OCI-LY7 (cell line): ENCODE measurements at regions of chr5 and their contacts with region 1.

Region 1: GRCh38 chr5:88819301-88819999 is 63.5 kb downstream of the MEF2C start:
- DNase-seq: no peak
- H3K4me3 ChIP-seq: no peak overlapping the region
- H3K27ac ChIP-seq: no peak overlapping the region
- H3K4me1 ChIP-seq: peaks cover 50% of the 10 kb centered on the region
- CTCF ChIP-seq: no peak

Region 2: GRCh38 chr5:88583471-88583870 is 236.0 kb before region 1 on chr5:
- CTCF ChIA-PET with region 1: no interaction called
- POLR2A ChIA-PET with region 1: no interaction called
- intact Hi-C with region 1: no loop called
- DNase-seq: no peak
- H3K4me3 ChIP-seq: no peak overlapping the region
- H3K27ac ChIP-seq: no peak overlapping the region
- H3K4me1 ChIP-seq: no peaks in the 10 kb centered on the region
- CTCF ChIP-seq: no peak

Region 3: DNA sequence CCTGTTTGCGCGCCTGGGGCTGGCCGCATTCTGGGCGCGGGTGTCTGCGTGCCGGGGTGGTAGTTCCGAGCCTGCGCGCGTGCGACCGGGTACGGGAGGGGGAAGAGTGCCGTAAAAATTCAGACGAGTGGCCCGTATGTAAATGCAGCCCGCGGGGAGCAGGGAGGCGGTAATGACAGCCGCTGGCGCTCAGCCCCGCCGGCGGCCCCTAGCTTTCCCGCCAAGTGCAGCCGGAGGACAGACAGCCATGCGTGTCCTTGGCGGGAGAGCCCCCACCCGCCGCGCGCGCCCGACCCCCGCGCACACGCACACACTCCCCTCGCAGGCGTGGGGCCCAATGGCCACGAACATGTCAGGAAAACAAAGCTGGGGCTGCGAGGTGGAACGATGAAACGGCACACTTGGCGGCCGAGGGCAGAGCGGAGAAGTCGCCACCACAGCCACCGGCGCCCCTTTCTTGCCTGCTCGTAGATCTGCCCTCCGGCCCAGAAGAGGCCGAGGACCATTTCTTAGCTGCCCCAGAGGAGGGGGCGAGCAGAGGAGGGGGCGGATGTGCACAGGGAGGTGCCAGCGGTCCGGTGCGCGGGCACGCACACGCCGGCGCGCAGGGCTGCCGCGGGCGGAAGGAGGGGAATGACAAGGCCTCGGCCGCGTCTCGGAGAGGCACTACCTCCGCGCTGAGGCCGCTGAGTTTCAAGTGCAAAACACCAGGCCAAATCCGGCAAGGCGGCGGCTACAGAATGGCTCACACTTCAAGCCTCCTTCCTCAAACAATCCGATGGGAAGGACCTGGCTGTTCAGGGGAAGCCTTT is 144.9 kb before region 1 on chr5:
- CTCF ChIA-PET with region 1: no interaction called
- POLR2A ChIA-PET with region 1: interaction called, 10 read pairs
- intact Hi-C with region 1: no loop called
- DNase-seq: peak; percentile 91
- H3K4me3 ChIP-seq: peak overlapping the region; percentile 72
- H3K27ac ChIP-seq: peak overlapping the region; percentile 97
- H3K4me1 ChIP-seq: peaks cover 36% of the 10 kb centered on the region
- CTCF ChIP-seq: no peak

Region 4: DNA sequence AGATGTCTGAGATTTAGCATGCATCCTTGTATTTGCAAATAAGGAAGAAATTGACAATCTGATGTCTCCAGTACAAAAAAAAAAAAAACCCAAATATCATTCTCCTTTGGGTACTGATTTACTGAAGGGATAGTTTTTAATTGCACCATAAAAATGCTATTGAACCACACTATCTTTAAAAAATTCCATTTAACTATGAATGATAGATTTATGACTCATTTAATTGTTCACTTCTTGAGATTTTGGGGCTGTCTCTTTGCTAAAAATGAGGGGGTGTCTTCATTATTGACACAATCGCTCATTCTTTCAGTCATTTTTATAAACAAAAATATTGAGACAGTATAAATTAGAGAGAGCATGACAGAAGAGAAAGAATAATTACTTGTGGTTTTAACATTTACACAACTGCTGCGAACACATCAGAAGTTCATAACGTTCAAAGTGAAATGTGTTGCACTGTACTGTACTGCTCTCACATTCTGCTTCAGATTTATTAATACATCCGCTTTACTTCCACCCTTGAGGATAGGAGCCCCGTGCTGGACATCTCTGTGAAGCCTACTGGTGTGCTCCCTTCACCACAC is 78.8 kb before region 1 on chr5:
- CTCF ChIA-PET with region 1: no interaction called
- POLR2A ChIA-PET with region 1: interaction called, 17 read pairs
- intact Hi-C with region 1: no loop called
- DNase-seq: no peak
- H3K4me3 ChIP-seq: no peak overlapping the region
- H3K27ac ChIP-seq: no peak overlapping the region
- H3K4me1 ChIP-seq: peaks cover 18% of the 10 kb centered on the region
- CTCF ChIP-seq: no peak

Region 5: GRCh38 chr5:88808153-88808552 is 11.3 kb before region 1 on chr5:
- CTCF ChIA-PET with region 1: no interaction called
- POLR2A ChIA-PET with region 1: interaction called, 16 read pairs
- intact Hi-C with region 1: no loop called
- DNase-seq: no peak
- H3K4me3 ChIP-seq: no peak overlapping the region
- H3K27ac ChIP-seq: no peak overlapping the region
- H3K4me1 ChIP-seq: peaks cover 2% of the 10 kb centered on the region
- CTCF ChIP-seq: no peak

Region 6: DNA sequence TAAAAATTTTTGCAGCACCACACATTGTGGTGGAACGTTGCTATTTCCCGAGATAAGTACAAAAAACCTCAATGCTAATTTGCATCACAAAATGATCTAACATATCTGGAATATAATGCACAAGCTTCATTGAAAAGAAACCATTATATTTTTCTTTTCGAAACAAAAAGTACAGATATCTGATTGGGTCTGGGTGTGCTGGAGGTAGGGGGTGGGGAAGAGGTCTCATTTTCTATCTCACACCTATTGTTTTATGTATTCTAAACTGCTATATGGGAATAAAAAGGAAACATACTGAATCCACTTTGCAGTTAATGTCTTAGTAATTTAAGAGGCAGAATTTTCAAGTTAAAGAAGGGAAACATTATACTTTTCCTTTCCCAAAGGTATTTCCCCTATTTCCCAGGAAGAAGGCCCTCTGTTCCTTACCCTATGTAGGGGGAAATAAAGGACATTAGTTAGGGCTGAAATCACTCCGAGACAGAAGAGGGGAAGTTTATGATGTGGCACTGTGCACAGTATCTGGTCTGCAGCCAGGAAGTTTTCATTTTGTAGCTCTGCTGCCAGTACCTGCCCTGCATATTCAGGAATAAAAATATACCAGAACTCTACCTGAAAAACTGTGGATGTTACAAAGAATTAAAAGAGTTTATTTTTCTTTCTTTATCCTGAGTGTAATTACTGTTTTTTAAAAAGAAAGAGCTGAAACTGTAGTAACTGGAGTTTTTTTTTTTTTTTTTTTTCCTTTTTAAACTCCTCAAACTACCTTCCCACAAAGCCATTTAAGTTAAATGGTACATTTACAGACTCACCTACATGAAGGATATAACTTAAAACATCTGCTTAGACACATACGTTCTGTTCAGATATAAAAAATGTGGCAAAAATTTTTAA is 56.1 kb after region 1 on chr5:
- CTCF ChIA-PET with region 1: no interaction called
- POLR2A ChIA-PET with region 1: interaction called, 24 read pairs
- intact Hi-C with region 1: no loop called
- DNase-seq: peak; percentile 56
- H3K4me3 ChIP-seq: peak overlapping the region; percentile 55
- H3K27ac ChIP-seq: peak overlapping the region; percentile 33
- H3K4me1 ChIP-seq: peaks cover 55% of the 10 kb centered on the region
- CTCF ChIP-seq: no peak

Region 7: DNA sequence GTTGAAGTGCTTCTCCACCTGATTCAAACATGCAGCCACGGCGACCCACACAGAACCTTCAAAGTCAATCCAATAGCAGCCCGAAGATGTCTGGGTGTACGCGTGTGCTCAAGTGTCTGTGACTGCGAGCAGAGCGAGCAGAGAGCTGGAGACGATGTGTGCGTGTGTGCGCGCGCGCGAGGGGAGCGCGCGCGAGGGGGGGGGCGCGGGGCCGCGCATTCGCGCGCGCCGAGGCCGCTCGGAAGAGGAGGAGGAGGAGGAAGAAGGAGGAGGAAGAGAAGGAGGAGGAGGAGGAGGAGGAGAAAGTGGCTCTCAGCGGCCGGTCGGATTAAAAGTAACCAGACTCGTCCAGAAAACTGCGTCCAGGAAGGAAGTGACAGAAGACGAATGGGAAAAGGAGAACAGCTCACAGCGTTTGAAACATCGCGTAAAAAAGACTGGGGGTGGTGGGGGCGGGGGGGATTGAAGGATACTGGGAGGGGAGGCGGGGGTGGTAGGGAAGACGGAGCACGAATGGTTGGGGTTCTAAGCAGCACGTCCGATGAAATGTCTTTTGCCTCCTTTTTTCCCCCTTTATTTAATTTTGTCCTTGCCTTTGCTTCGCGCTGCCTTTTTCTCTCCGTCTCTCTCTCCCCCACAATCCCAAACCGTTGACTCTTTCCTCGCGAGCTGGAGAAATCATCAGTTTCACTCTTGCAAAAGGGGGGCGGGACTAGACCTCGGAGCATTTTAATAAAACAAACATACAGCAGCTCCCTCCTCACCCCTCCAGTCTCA is 63.8 kb after region 1 on chr5 and contains the start of gene MEF2C:
- CTCF ChIA-PET with region 1: no interaction called
- POLR2A ChIA-PET with region 1: interaction called, 16 read pairs
- intact Hi-C with region 1: no loop called
- DNase-seq: peak; percentile 78
- H3K4me3 ChIP-seq: peak within 1 kb of the TSS; percentile 73
- H3K27ac ChIP-seq: peak within 1 kb of the TSS; percentile 2
- H3K4me1 ChIP-seq: peaks cover 39% of the 10 kb centered on the region
- CTCF ChIP-seq: no peak
- total RNA-seq, gene MEF2C: 5.5 and 9.5 TPM in 2 replicates